ENCODE measurements at regions of chr17 and their contacts with region 1.

Region 1: GRCh38 chr17:77957857-77958715 is at the start of gene TNRC6C:
- DNase-seq: peak; percentile 100
- ATAC-seq: peak; percentile 93 to 98
- H3K4me3 ChIP-seq: peak within 1 kb of the TSS; percentile 81
- H3K27ac ChIP-seq: peak within 1 kb of the TSS; percentile 74 to 91
- H3K4me1 ChIP-seq: peaks cover 5% of the 10 kb centered on the region; the same call in 2 of the 3 replicates
- CTCF ChIP-seq: 0 out of 3 replicates have a peak, but pooled peaks have one; percentile 12
- EP300 ChIP-seq: no peak
- POLR2A ChIP-seq: peak; percentile 100
- RAD21 ChIP-seq: no peak; a peak in 1 of 5 replicates
- polyA plus RNA-seq, gene TNRC6C: 1.3 and 3.4 TPM in 2 replicates

Region 2: GRCh38 chr17:77542551-77543490 is 415.3 kb before region 1 on chr17:
- CTCF ChIA-PET with region 1: interaction called, 13 read pairs
- POLR2A ChIA-PET with region 1: interaction called, 38 read pairs
- DNase-seq: peak; percentile 88 to 91
- ATAC-seq: peak; percentile 95 to 97
- H3K4me3 ChIP-seq: no peak overlapping the region
- H3K27ac ChIP-seq: peak overlapping the region; percentile 10 to 48; a peak in 1 of 6 replicates
- H3K4me1 ChIP-seq: peaks cover 16% of the 10 kb centered on the region
- CTCF ChIP-seq: peak; percentile 97
- EP300 ChIP-seq: no peak
- POLR2A ChIP-seq: no peak
- RAD21 ChIP-seq: peak; percentile 99 to 100

Region 3: GRCh38 chr17:77834170-77835115 is 123.6 kb before region 1 on chr17:
- CTCF ChIA-PET with region 1: no interaction called
- POLR2A ChIA-PET with region 1: interaction called, 31 read pairs
- DNase-seq: peak; percentile 71 to 99
- ATAC-seq: peak; percentile 92 to 97
- H3K4me3 ChIP-seq: no peak overlapping the region; the same call in 2 of the 3 replicates
- H3K27ac ChIP-seq: peak overlapping the region; percentile 42 to 64; a peak in 5 of 6 replicates
- H3K4me1 ChIP-seq: peaks cover 35% of the 10 kb centered on the region
- CTCF ChIP-seq: no peak
- EP300 ChIP-seq: no peak
- POLR2A ChIP-seq: no peak
- RAD21 ChIP-seq: 0 out of 5 replicates have a peak, but pooled peaks of 1 of the 2 experiments have one; percentile 11

Region 4: DNA sequence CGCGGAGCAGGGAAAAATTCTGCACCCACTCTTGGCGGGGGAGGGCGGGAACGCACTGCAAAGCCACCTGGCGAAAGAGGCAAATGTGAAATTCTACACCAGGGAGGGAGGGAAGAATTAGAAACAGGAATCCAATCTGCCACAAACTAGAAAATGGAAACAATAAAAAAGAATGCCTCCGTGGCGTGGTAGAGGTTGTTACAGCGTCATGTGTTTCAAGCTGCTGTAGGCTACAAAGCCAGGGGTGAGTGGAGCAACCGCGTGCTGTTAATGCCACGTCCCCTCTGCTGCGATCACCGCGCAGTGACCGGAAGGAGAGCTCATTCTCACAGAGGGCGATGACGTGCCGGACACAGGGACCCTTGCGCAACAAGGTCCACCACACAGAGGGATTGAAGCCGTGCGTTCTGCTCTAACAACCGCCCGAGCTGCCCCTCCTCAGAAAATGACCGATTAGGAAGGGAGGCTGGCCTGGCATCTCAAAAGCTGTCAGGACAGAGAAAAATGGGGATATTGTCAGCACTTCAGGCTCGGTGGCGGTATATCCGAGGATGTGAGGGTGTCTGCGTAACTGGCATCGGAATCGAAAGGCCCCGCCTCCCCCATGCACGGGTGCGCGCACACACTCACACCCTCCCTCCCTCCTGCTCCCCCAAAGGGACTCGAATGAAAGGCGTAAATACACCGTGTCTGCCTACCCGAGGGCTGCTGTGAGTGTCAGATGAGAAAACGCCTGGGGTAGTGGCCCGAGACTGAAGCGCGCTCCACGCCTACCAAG is 70.4 kb before region 1 on chr17:
- CTCF ChIA-PET with region 1: no interaction called
- POLR2A ChIA-PET with region 1: interaction called, 48 read pairs
- DNase-seq: peak; percentile 64 to 68
- ATAC-seq: peak; percentile 63 to 65
- H3K4me3 ChIP-seq: peak overlapping the region; percentile 49
- H3K27ac ChIP-seq: peak overlapping the region; percentile 15 to 73; a peak in 4 of 6 replicates
- H3K4me1 ChIP-seq: peaks cover 20% of the 10 kb centered on the region; the same call in 2 of the 3 replicates
- CTCF ChIP-seq: no peak
- EP300 ChIP-seq: no peak
- POLR2A ChIP-seq: no peak
- RAD21 ChIP-seq: no peak; a peak in 1 of 5 replicates

Region 5: GRCh38 chr17:77930780-77931768 is 27.0 kb before region 1 on chr17:
- CTCF ChIA-PET with region 1: no interaction called
- POLR2A ChIA-PET with region 1: interaction called, 16 read pairs
- DNase-seq: no peak
- ATAC-seq: no peak
- H3K4me3 ChIP-seq: no peak overlapping the region
- H3K27ac ChIP-seq: no peak overlapping the region
- H3K4me1 ChIP-seq: no peaks in the 10 kb centered on the region
- CTCF ChIP-seq: no peak
- EP300 ChIP-seq: no peak
- POLR2A ChIP-seq: no peak
- RAD21 ChIP-seq: no peak

Region 6: DNA sequence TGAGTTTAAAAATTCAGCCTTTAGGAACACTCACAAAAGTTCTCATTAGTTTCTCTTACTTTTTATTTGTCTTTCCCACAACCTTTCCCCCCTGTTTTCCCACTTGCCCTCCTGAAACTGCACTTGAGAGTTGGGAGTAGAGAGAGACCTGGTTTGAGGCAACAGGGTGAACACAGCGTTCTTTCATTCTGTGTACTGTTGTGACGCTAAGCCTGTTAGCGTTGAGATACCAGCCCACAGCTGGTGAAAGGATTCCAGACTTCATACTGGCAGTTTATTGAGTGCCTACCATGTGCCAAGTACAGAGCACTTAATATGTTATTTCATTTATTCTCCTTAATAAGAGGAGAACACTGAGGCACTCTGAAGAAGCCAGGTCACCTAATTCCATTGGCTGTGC is 10.7 kb after region 1 on chr17:
- CTCF ChIA-PET with region 1: interaction called, 4 read pairs
- POLR2A ChIA-PET with region 1: interaction called, 60 read pairs
- DNase-seq: no peak
- ATAC-seq: no peak
- H3K4me3 ChIP-seq: no peak overlapping the region
- H3K27ac ChIP-seq: no peak overlapping the region
- H3K4me1 ChIP-seq: no peaks in the 10 kb centered on the region
- CTCF ChIP-seq: no peak
- EP300 ChIP-seq: no peak
- POLR2A ChIP-seq: no peak
- RAD21 ChIP-seq: no peak

Region 7: DNA sequence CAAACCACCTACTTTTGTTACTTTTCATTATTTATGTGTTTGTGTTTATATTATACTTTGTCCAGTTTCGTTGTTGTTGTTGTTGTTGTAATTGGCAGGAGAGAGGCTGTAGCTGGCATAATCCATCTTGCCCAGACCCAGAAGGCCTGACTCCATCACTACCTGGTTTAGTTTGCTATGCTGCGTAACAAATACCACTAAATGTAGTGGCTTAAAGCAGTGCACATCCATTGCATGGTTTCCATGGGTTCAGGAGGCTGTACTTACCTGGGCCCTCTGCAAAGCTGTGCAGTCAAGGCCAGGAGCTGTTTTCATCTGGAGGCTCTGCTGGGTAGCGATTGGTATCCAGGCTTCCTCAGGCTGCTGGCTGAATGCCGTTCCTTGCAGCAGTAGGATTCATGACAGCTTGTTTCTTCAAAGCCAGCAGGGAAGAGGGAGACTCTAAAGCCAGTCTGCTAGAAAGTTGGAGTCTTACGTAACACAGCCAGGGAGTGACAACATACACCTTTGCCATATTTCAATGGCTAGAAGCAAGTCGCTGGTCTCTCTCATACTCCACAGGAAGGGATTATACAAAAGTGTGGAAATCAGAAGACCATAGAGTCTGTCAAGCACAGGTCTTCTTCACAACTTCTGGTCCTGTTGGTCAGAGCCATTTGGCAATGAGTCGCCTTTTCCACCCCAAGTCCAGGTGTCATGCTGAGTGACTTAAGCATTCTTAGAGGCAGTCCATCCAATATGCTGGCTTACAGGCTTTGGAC is 41.5 kb after region 1 on chr17:
- CTCF ChIA-PET with region 1: no interaction called
- POLR2A ChIA-PET with region 1: interaction called, 15 read pairs
- DNase-seq: no peak
- ATAC-seq: no peak
- H3K4me3 ChIP-seq: no peak overlapping the region
- H3K27ac ChIP-seq: no peak overlapping the region
- H3K4me1 ChIP-seq: no peaks in the 10 kb centered on the region
- CTCF ChIP-seq: no peak
- EP300 ChIP-seq: no peak
- POLR2A ChIP-seq: no peak
- RAD21 ChIP-seq: no peak

Region 8: DNA sequence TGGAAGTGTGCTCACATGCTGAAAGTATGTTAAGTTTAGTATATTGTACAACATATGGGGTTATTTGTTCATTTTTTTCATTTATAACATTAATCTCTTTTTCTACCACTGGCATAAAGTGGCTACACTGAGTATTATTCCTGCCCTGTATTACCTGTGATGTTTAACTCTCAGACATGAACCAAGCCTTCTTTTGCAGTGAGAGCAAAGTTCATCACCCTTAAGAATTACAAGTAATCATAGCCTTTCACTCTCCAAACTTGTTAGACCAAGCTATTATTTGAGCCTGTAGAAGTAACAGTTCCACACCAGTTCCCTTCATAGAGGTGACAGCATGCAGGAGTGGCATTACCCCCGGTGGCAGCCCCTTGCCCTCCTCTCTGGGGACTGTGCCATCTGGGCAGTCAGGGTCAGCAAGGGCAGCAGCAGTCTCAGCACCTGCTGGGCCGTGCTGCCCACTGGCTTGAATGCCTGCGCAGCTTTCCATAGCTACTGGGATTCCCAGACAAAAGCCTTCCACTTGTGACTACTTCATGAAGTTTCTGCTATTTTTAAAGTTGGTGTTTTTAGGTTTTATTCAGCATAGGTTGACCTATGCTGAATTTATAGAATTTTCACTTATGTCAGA is 99.1 kb after region 1 on chr17:
- CTCF ChIA-PET with region 1: no interaction called
- POLR2A ChIA-PET with region 1: no interaction called
- DNase-seq: no peak
- ATAC-seq: no peak
- H3K4me3 ChIP-seq: no peak overlapping the region
- H3K27ac ChIP-seq: no peak overlapping the region
- H3K4me1 ChIP-seq: no peaks in the 10 kb centered on the region
- CTCF ChIP-seq: no peak
- EP300 ChIP-seq: no peak
- POLR2A ChIP-seq: no peak
- RAD21 ChIP-seq: no peak